Endothelial cell of umbilical vein (primary cell): ENCODE measurements at regions of chr17 and their contacts with region 1.

Region 1: GRCh38 chr17:73004255-73004545 is 88.3 kb downstream of the SLC39A11 start:
- DNase-seq: no peak
- H3K4me3 ChIP-seq: no peak overlapping the region
- H3K27ac ChIP-seq: no peak overlapping the region
- H3K4me1 ChIP-seq: no peaks in the 10 kb centered on the region
- H3K27me3 ChIP-seq: no peaks in the 10 kb centered on the region
- CTCF ChIP-seq: no peak
- POLR2A ChIP-seq: no peak

Region 2: DNA sequence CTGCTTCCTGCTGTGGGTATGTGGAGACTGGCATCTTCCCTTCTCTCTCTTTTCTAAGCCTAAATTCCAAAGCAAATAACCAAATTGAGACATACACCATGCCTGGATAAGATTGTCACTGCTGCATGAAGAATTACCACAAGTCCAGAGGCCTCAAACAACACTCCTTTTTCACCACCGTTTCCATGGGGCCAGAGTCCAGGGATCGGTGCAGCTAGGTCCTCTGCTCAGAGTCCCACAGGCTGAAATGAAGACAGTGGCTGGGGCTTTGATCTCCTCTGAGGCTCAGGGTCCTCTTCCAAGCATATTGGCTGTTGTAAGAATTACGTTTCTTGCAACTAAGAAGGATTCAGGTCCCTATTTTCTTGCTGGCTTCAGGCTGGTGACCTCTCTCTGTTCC is 42.1 kb before region 1 on chr17:
- CTCF ChIA-PET with region 1: no interaction called
- POLR2A ChIA-PET with region 1: no interaction called
- dilution Hi-C with region 1: no loop called
- intact Hi-C with region 1: no loop called
- DNase-seq: no peak
- H3K4me3 ChIP-seq: no peak overlapping the region
- H3K27ac ChIP-seq: no peak overlapping the region
- H3K4me1 ChIP-seq: no peaks in the 10 kb centered on the region
- H3K27me3 ChIP-seq: no peaks in the 10 kb centered on the region
- CTCF ChIP-seq: no peak
- POLR2A ChIP-seq: no peak

Region 3: GRCh38 chr17:73017658-73018057 is 13.5 kb after region 1 on chr17:
- CTCF ChIA-PET with region 1: no interaction called
- POLR2A ChIA-PET with region 1: no interaction called
- dilution Hi-C with region 1: no loop called
- intact Hi-C with region 1: no loop called
- DNase-seq: no peak
- H3K4me3 ChIP-seq: no peak overlapping the region
- H3K27ac ChIP-seq: no peak overlapping the region
- H3K4me1 ChIP-seq: no peaks in the 10 kb centered on the region
- H3K27me3 ChIP-seq: no peaks in the 10 kb centered on the region
- CTCF ChIP-seq: no peak
- POLR2A ChIP-seq: no peak

Region 4: GRCh38 chr17:73803964-73804435 is 799.8 kb after region 1 on chr17:
- CTCF ChIA-PET with region 1: no interaction called
- POLR2A ChIA-PET with region 1: no interaction called
- dilution Hi-C with region 1: no loop called
- intact Hi-C with region 1: loop called (anchors 5 kb)
- DNase-seq: no peak
- H3K4me3 ChIP-seq: no peak overlapping the region
- H3K27ac ChIP-seq: no peak overlapping the region
- H3K4me1 ChIP-seq: no peaks in the 10 kb centered on the region
- H3K27me3 ChIP-seq: no peaks in the 10 kb centered on the region
- CTCF ChIP-seq: no peak
- POLR2A ChIP-seq: no peak